Motor neuron (in vitro differentiated cells): ENCODE measurements at regions of chr4 and their contacts with region 1.

Region 1: DNA sequence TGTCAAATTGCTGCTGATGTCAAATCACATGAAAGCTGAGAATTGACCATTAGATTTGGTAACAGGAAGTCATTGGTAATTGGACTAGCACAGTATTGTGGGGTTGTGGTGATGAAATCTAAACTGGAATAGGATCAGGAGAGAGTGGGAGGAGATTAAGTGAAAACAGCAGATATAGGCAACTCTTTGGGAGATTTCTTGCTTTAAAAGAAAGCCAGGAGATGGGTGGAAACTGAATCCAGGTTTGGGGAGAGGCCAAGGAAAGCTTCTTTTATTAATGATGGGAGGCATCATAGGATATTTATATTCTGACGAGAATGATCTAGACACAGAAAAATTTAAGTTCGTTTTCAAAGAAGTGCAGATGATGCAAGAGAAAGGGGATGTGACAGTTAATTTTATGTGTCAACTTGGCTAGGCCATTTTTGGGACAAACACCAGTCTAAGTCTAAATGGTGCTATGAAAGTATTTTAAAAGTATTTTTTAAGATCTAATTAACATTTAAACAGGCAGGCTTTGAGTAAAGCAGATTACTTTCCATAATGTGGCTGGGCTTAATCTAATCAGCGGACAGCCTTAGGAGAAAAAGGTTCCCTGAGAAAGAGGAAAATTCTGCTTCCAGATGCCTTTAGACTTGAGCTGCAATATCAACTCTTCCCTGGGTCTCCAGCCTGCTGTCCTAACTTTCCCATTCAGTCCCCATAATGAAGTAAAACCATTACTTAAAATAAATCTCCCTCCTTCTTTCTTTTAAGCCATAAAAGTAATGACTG is 24.7 kb downstream of the SEC24D start:
- ATAC-seq: peak in 2 of 8 experiments; percentile 92 to 96
- H3K4me3 ChIP-seq: no peak overlapping the region
- H3K27ac ChIP-seq: no peak overlapping the region
- H3K4me1 ChIP-seq: no peaks in the 10 kb centered on the region

Region 2: GRCh38 chr4:118712872-118713271 is 98.3 kb before region 1 on chr4:
- in situ Hi-C with region 1: loop called in 1 of 9 experiments (anchors 25 kb)
- ATAC-seq: no peak
- H3K4me3 ChIP-seq: no peak overlapping the region
- H3K27ac ChIP-seq: no peak overlapping the region
- H3K4me1 ChIP-seq: no peaks in the 10 kb centered on the region

Region 3: DNA sequence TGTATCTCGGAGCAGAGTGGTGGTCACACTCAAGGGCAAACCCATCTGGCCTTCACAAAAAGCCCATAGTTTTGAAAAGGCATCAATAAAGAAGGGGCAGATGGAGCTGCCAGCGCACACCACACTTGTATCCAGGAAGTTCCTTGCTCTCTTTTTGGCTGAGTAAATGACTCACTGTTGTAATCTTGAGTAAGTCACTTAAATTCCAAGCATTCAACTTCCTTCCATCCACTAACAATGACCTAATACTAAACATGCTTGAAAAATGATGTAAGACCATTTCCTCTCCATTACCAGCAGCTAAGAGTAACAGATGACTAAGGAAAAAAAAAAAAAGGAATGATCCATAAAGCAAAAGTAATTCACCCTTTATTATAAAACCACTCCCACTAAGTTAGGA is 292.1 kb after region 1 on chr4:
- in situ Hi-C with region 1: no loop called
- ATAC-seq: peak; percentile 18 to 99 (median 68)
- H3K4me3 ChIP-seq: no peak overlapping the region
- H3K27ac ChIP-seq: no peak overlapping the region
- H3K4me1 ChIP-seq: no peaks in the 10 kb centered on the region